PC-9 (cell line): ENCODE measurements at regions of chr20 and their contacts with region 1.

Region 1: GRCh38 chr20:64119681-64120341 is 12.4 kb upstream of the NPBWR2 start:
- DNase-seq: peak in 1 of 2 experiments; percentile 28
- H3K4me3 ChIP-seq: no peak overlapping the region
- H3K27ac ChIP-seq: no peak overlapping the region
- H3K4me1 ChIP-seq: no peaks in the 10 kb centered on the region
- H3K27me3 ChIP-seq: peaks cover 55% of the 10 kb centered on the region
- CTCF ChIP-seq: no peak

Region 2: DNA sequence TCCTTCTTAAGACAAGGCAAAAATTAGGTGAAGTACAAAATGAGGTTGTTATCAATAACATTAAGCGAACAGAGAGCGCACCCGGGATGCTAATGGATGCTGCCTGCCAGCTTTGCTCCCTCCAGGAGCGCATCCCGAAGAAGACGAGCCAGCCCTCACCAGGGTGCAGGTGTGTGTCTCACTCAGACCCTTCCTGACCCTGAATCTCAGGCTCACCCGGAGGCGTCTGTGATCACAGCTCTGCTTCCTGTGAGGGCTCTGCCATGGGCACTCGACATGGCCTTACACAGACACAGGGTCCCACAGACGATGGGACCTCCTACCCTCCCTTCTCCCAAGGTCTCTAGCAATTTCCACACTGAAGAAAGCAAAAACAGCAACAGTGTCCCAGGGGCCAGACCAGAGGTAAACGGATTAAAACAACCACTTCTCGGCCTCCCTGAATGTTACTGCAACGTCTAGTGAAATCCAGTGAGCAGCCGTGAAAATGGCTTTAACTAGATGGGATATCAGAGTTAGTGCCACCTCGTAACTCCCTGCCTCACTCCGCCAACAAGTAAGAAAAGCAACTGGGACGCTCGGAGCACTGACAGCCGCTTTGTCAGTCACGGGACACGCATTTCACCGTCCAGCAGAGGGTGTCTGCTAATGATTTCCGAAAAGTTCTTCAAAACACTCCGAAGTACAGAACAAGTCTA is 300.4 kb before region 1 on chr20:
- CTCF ChIA-PET with region 1: no interaction called
- POLR2A ChIA-PET with region 1: interaction called, 17 read pairs
- intact Hi-C with region 1: no loop called
- DNase-seq: no peak
- H3K4me3 ChIP-seq: no peak overlapping the region
- H3K27ac ChIP-seq: no peak overlapping the region
- H3K4me1 ChIP-seq: no peaks in the 10 kb centered on the region
- H3K27me3 ChIP-seq: no peaks in the 10 kb centered on the region
- CTCF ChIP-seq: no peak

Region 3: GRCh38 chr20:63955827-63956663 is 163.8 kb before region 1 on chr20 and contains the start of gene UCKL1:
- CTCF ChIA-PET with region 1: no interaction called
- POLR2A ChIA-PET with region 1: no interaction called
- intact Hi-C with region 1: loop called (anchors 5 kb)
- DNase-seq: peak; percentile 74 to 94
- H3K4me3 ChIP-seq: peak within 1 kb of the TSS; percentile 74
- H3K27ac ChIP-seq: peak within 1 kb of the TSS; percentile 65
- H3K4me1 ChIP-seq: peaks cover 26% of the 10 kb centered on the region; the same call in 1 of the 2 replicates
- H3K27me3 ChIP-seq: no peaks in the 10 kb centered on the region
- CTCF ChIP-seq: 0 out of 2 replicates have a peak, but pooled peaks have one; percentile 13
- total RNA-seq, gene UCKL1: 51.7 and 55.1 TPM in 2 replicates

Region 4: DNA sequence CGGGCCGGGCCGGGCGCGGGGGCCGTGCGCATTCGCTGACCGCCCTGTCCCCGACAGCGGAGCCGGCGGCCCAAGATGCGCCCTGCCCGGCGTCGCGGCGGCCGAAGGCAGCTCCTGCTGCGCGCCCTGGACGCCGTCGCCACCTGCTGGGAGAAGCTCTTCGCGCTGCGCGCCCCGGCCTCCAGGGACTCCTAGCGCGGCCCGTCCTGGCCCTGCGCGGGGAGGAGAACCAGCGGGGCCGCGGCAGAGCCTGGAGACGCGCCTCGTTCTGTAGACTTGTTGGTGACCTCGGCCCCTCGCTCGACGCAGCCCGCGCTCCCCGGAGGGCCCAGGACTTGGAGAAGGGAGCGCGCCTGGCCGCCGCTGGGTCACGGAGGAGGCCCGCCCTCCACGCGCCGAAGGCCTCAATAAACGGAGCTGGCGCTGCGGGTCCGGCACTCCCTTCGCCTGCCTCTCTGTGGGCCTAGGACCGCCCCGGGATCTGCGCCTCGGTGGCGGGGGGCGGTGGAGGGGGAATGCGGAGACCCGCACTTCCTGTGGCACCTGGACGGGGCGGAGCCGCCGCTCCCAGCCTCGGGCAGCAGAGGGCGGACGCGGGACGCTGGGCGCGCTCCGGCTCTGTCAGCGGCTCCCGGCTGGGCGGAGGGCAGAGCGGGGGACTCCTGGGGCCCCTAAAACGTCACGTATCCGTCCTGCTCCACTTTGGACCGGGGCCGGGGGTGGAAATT is 81.1 kb before region 1 on chr20:
- CTCF ChIA-PET with region 1: interaction called, 7 read pairs
- POLR2A ChIA-PET with region 1: no interaction called
- intact Hi-C with region 1: loop called (anchors 1 kb)
- DNase-seq: peak; percentile 69 to 87
- H3K4me3 ChIP-seq: peak overlapping the region; percentile 96
- H3K27ac ChIP-seq: no peak overlapping the region
- H3K4me1 ChIP-seq: peaks cover 13% of the 10 kb centered on the region; the same call in 1 of the 2 replicates
- H3K27me3 ChIP-seq: peaks cover 20% of the 10 kb centered on the region; the same call in 1 of the 2 replicates
- CTCF ChIP-seq: peak; percentile 86

Region 5: DNA sequence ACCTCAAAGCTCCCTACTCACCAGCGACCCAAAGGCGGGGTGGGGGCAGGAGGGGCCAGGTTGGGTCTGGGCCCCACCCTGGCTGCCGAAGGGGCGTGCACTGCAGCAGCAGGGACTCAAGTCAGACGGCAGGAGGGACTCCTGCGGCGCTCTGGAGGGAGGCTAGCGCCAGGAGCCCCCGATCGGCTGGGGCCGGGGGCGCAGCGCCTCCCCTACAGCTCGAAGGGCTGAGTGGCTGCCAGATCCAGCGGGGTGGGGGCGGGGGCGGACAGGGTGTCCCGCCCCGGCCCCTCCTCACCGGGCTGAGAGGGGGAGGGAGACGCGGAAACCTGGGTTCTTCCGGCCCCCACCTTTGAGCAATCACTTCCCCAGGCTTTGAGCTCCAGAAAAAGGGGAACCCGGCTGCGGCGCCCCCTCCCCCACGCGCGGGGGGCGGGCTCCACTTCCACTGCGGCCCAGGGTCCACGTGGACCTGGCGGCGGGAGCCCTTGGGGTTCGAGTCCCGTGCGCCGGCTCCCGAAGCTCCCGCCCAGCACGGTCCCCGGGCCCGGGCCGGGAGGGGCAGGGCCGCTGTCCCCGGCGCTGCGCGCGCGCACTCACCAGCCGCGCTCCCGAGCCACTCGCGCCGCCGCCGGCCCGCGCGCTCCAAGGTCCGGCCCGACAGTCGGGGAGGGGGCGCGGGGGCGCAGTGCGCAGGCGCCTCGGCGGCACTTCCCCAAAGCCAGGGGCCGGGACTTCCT is 40.4 kb before region 1 on chr20 and contains the start of gene RGS19:
- CTCF ChIA-PET with region 1: no interaction called
- POLR2A ChIA-PET with region 1: no interaction called
- intact Hi-C with region 1: loop called (anchors 5 kb)
- DNase-seq: peak in 1 of 2 experiments; percentile 88
- H3K4me3 ChIP-seq: peak within 1 kb of the TSS; percentile 94
- H3K27ac ChIP-seq: no peak within 1 kb of the TSS
- H3K4me1 ChIP-seq: peaks cover 14% of the 10 kb centered on the region
- H3K27me3 ChIP-seq: peaks cover 20% of the 10 kb centered on the region
- CTCF ChIP-seq: no peak
- total RNA-seq, gene RGS19: 33.3 and 39.2 TPM in 2 replicates

Region 6: DNA sequence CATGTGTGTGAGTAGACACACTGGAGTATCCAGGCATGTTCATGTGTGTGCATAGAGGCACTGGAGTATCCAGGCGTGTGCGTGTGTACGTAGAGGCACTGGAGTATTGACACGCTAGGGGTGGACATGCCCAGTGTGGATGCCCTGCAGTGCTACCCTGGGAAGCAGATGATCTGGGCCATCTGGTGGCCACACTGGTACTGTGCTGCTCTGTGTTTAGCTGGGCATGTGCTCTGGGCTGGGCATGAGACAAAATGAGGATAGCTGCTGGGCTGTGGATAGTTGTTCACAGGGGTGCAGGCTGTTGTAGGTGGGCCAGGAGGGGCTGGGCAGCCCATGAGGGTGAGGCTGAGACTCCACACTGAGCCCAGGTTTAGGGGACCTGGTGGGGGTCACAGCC is 11.6 kb after region 1 on chr20:
- CTCF ChIA-PET with region 1: no interaction called
- POLR2A ChIA-PET with region 1: no interaction called
- intact Hi-C with region 1: no loop called
- DNase-seq: peak in 1 of 2 experiments; percentile 30
- H3K4me3 ChIP-seq: no peak overlapping the region
- H3K27ac ChIP-seq: no peak overlapping the region
- H3K4me1 ChIP-seq: no peaks in the 10 kb centered on the region
- H3K27me3 ChIP-seq: peaks cover 34% of the 10 kb centered on the region
- CTCF ChIP-seq: peak; percentile 51